Transverse colon (tissue), 4 donors: ENCODE measurements at regions of chr14 and their contacts with region 1.

Region 1: GRCh38 chr14:103576371-103577024 is 13.7 kb downstream of the COA8 start:
- DNase-seq: peak; percentile 95
- H3K4me3 ChIP-seq: no peak overlapping the region
- H3K27ac ChIP-seq: peak overlapping the region; percentile 82 to 90 (median 86)
- H3K4me1 ChIP-seq: peaks cover 16 to 40% (median 29%) of the 10 kb centered on the region in 4 donors
- H3K27me3 ChIP-seq: no peaks in the 10 kb centered on the region
- CTCF ChIP-seq: no peak
- EP300 ChIP-seq: peak; percentile 5
- POLR2A ChIP-seq: peak; percentile 12

Region 2: DNA sequence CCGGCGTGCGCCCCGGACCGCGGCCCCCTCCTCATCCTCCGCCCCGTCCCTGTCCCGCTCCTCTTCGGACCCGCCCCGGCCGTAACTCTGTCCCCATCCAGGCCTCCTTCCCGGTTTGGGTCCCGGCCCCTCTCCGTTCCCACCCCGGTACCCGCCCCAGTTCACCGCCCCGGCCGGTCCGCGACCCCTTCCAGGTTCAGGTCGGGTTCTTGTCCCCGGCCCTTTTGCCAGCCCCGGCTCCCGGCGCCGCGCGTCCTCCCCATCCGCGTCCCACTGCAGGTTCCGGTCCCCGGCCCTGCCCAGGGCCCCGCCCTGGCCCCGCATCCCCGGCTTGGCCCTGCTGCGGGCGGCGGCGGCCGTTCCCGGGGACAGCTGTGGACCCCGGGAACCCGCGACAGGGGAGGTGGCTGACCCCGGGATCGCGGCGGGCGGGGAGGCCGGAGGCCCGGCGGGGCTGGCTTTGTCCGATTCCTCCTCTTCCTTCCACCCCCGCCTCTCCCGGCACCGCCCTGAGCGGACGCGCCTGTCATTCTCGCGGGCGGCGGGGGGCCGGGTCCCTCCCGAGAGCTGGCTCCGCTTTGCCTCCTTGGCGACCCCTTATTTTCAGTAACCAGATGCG is 53.1 kb after region 1 on chr14:
- in situ Hi-C with region 1: no loop called
- intact Hi-C with region 1: loop called (anchors 10 kb)
- DNase-seq: peak; percentile 58
- H3K4me3 ChIP-seq: peak overlapping the region; percentile 84 to 100 (median 92)
- H3K27ac ChIP-seq: peak overlapping the region; percentile 97 to 99 (median 98)
- H3K4me1 ChIP-seq: peaks cover 23 to 76% (median 46%) of the 10 kb centered on the region in 4 donors
- H3K27me3 ChIP-seq: no peaks in the 10 kb centered on the region
- CTCF ChIP-seq: no peak
- EP300 ChIP-seq: no peak
- POLR2A ChIP-seq: no peak

Region 3: DNA sequence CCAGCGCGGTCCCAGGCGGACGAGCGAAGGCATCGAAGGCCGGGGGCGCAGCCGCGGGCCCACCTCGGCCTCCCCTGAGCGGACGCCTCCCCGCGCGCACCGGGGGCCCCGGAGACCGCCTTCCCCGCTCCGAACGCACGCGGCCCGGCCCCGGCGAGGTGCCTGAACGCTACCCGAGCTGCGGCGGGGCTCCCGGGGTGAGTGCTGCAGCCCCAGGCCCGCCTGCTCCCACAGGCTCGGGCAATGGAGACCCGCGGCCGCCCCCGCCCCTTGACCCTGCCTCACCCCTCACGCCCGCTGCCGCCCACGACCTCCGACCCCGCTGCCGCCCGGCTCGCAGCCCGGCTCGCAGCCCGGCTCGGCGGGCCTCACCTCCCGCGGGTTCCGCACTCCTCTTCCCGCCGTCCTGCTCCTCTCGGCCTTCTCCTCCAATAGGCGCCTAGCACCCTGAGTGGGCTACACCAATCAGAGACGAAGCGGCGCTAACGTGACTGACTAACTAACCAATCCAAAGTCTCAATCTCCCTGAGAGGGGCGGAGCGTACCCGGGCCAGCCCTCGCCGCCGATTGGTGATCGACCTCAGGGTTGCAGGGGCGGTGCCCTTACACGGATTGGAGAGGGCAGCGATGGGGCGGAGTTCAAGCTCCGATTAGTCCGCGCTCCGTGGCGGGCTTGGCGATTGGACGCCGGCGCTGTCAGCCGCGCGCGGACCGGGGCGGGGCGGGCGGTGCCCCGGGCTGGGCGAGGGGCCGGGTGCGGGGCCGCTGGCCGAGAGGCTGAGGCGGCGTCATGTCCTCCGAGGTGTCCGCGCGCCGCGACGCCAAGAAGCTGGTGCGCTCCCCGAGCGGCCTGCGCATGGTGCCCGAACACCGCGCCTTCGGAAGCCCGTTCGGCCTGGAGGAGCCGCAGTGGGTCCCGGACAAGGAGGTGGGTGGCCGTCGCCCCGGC is 138.8 kb after region 1 on chr14 and contains the starts of genes XRCC3 and ZFYVE21:
- in situ Hi-C with region 1: no loop called
- intact Hi-C with region 1: loop called (anchors 10 kb)
- DNase-seq: peak; percentile 100
- H3K4me3 ChIP-seq: peak within 1 kb of the TSS; percentile 56 to 96 (median 87)
- H3K27ac ChIP-seq: peak within 1 kb of the TSS; percentile 91 to 97 (median 92)
- H3K4me1 ChIP-seq: peaks cover 26 to 59% (median 45%) of the 10 kb centered on the region in 4 donors
- H3K27me3 ChIP-seq: no peaks in the 10 kb centered on the region
- CTCF ChIP-seq: no peak
- EP300 ChIP-seq: no peak
- POLR2A ChIP-seq: peak; percentile 61
- total RNA-seq, gene XRCC3: 7.8 to 47.6 (median 23.8) TPM
- total RNA-seq, gene ZFYVE21: 90.2 to 214 (median 137) TPM

Region 4: DNA sequence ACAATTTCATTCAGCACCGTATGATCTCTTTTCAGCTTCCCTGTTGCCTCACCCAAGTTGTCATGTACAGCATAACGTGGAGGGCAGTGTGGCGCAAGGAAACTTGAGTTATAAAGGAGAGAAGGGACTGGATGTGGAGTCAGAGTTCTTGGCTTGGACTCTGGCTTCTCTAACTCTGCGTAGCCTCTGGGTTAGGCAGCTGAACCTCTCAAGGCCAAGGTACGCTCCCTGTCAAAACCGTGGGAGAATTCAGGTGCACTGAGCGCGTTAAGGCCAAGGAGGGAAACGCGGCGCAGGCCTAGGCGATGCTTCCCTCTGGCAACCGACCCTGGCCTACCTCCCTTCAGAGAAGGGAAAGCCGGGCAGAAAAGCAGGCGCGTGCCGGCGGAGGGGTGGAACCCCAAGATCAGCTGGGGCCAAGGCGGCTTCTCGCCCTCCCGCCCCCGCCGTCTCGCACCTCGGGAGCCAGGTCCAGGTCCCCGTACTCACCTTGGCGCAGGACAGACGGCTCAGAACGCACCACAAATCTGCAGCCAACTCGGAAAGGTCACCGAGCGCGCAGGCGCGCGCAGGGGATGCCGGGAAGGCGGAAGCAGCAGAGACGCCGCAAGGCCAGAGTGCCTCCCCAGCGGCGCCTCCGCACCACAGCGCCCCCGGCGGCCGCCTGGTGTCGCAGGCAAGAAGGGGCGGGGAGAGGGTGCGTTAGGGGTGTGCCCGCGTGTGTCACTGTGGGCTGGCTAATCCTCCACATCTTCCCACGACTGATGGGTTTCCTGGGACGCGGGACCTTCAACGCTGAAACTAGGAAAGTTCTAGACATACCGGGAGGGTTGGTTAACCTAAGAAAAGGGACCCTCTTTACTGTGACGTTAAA is 344.7 kb after region 1 on chr14:
- in situ Hi-C with region 1: loop called in 1 of 4 experiments (anchors 25 kb)
- intact Hi-C with region 1: no loop called
- DNase-seq: peak; percentile 94
- H3K4me3 ChIP-seq: peak overlapping the region; percentile 83 to 87 (median 86)
- H3K27ac ChIP-seq: peak overlapping the region; percentile 87 to 93 (median 88)
- H3K4me1 ChIP-seq: peaks cover 7 to 23% (median 15%) of the 10 kb centered on the region in 4 donors
- H3K27me3 ChIP-seq: peaks cover 16% of the 10 kb centered on the region
- CTCF ChIP-seq: peak; percentile 87 to 98 (median 96)
- EP300 ChIP-seq: no peak
- POLR2A ChIP-seq: peak; percentile 88